ENCODE measurements at regions of chr14 and their contacts with region 1.

Region 1: GRCh38 chr14:75982266-75983018 is 647 bp upstream of the TGFB3 start:
- DNase-seq: peak; percentile 75
- H3K4me3 Mint-ChIP-seq: peak overlapping the region; percentile 83
- H3K27ac Mint-ChIP-seq: peak overlapping the region; percentile 61
- H3K4me1 Mint-ChIP-seq: peaks cover 29% of the 10 kb centered on the region
- H3K27me3 Mint-ChIP-seq: peaks cover 22% of the 10 kb centered on the region

Region 2: GRCh38 chr14:75577729-75578101 is 404.7 kb before region 1 on chr14:
- intact Hi-C with region 1: loop called (anchors 5 kb)
- DNase-seq: peak; percentile 60
- H3K4me3 Mint-ChIP-seq: peak overlapping the region; percentile 81
- H3K27ac Mint-ChIP-seq: peak overlapping the region; percentile 42
- H3K4me1 Mint-ChIP-seq: peaks cover 19% of the 10 kb centered on the region
- H3K27me3 Mint-ChIP-seq: peaks cover 3% of the 10 kb centered on the region

Region 3: DNA sequence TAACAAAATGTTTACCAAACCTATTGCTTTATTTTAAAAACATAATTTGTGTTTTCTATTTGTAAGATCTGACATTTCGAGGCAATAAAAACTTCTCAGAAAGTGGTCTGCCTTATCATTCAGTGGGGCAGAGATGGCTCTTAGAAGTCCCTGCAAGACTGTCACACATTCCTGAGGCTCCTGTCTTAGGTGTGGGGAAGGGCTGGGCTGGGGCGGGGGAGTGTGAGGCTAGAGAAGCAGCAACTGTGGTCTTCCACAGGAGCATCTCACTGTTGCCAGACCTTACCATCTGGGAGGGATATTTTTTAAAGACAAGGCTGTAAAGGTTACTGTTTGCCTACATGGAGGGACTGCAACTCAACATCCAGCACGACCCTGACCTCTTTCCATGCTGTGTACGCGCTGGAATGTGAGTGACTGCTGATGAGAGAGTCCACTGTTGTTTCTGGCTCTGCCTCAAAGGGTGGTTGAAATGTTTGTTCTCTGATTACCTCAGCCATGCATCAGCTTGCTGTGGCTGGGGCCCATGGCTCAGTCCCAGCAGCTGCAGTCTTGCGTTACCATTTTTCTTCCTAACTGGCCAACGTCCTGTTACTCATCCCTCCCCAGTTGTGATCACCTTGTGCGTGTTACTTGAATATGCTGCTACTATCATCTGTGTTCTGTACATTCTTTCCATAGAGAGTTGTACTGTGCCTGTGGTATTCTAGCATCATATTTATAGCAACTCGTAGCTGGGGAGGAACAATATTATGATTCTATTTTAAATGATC is 334.2 kb before region 1 on chr14:
- intact Hi-C with region 1: no loop called
- DNase-seq: no peak
- H3K4me3 Mint-ChIP-seq: no peak overlapping the region
- H3K27ac Mint-ChIP-seq: no peak overlapping the region
- H3K4me1 Mint-ChIP-seq: no peaks in the 10 kb centered on the region
- H3K27me3 Mint-ChIP-seq: no peaks in the 10 kb centered on the region

Region 4: DNA sequence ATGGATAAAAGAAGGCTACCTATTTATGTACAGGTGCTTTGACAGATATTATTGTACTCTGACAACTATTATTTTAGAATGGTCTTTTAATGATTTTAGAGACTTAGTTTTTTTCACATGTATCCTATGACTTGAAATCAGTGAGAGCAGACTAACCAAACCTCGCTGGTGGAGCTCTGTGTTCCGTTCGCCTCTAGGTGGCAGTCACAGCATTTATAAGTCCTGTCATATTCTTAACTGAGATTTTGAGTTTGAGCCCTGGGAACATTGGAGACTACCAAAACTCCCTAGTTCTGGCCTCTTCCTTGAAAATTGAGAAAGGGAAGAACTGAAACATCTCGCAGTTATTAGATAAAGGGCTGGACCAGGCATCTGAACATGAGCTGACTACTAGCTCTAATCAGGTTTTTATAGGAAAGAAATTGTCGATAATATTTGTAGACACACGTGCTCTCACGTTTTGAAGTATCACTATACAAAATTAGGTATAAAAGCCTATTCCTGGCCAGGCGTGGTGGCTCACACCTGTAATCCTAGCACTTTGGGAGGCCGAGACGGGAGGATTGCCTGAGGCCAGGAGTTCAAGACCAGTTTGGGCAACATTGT is 273.1 kb before region 1 on chr14:
- intact Hi-C with region 1: loop called (anchors 1 kb)
- DNase-seq: peak; percentile 34
- H3K4me3 Mint-ChIP-seq: no peak overlapping the region
- H3K27ac Mint-ChIP-seq: no peak overlapping the region
- H3K4me1 Mint-ChIP-seq: no peaks in the 10 kb centered on the region
- H3K27me3 Mint-ChIP-seq: no peaks in the 10 kb centered on the region

Region 5: GRCh38 chr14:75906676-75907280 is 75.7 kb before region 1 on chr14:
- intact Hi-C with region 1: loop called (anchors 1 kb)
- DNase-seq: peak; percentile 37
- H3K4me3 Mint-ChIP-seq: no peak overlapping the region
- H3K27ac Mint-ChIP-seq: no peak overlapping the region
- H3K4me1 Mint-ChIP-seq: no peaks in the 10 kb centered on the region
- H3K27me3 Mint-ChIP-seq: no peaks in the 10 kb centered on the region

Region 6: GRCh38 chr14:76133083-76133498 is 150.6 kb after region 1 on chr14:
- intact Hi-C with region 1: no loop called
- DNase-seq: no peak
- H3K4me3 Mint-ChIP-seq: no peak overlapping the region
- H3K27ac Mint-ChIP-seq: no peak overlapping the region
- H3K4me1 Mint-ChIP-seq: peaks cover 2% of the 10 kb centered on the region
- H3K27me3 Mint-ChIP-seq: peaks cover 40% of the 10 kb centered on the region

Region 7: GRCh38 chr14:76151398-76152339 is 169.2 kb after region 1 on chr14 and contains the start of gene GPATCH2L:
- intact Hi-C with region 1: loop called (anchors 10 kb)
- DNase-seq: peak; percentile 94
- H3K4me3 Mint-ChIP-seq: peak within 1 kb of the TSS; percentile 96
- H3K27ac Mint-ChIP-seq: peak within 1 kb of the TSS; percentile 99
- H3K4me1 Mint-ChIP-seq: peaks cover 50% of the 10 kb centered on the region
- H3K27me3 Mint-ChIP-seq: peaks cover 2% of the 10 kb centered on the region
- total RNA-seq, gene GPATCH2L: 59.1 and 67.3 TPM in 2 replicates